Aorta (tissue), 5 donors: ENCODE measurements at regions of chr12 and their contacts with region 1.

Region 1: GRCh38 chr12:19186722-19187661 is 57.5 kb downstream of the PLEKHA5 start:
- DNase-seq: no peak
- ATAC-seq: peak; percentile 65
- H3K4me3 ChIP-seq: no peak overlapping the region
- H3K27ac ChIP-seq: no peak overlapping the region
- H3K4me1 ChIP-seq: peaks cover 10 to 11% of the 10 kb centered on the region in 2 donors
- H3K27me3 ChIP-seq: no peaks in the 10 kb centered on the region

Region 2: DNA sequence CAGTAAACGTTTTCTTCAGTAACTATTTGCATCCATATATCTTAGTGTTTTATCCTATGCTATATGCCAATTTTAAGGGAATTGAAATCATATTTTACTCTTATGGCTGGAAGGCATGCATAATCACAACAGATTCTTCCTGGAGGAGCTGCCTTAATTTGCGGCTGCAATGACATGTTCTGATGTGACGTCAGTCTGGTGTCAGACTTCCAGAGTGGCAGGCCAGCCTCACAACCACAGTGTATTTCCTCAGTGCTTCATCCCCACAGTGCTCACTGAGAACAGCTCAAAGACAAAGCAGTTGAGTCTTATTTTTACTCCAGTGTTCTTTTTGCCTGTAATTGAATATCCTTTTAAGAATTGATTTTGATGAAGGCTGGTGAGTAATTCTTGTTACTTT is 49.7 kb after region 1 on chr12:
- intact Hi-C with region 1: loop called in 1 of 2 experiments (anchors 5 kb)
- DNase-seq: peak; percentile 50 to 66
- ATAC-seq: peak; percentile 74
- H3K4me3 ChIP-seq: no peak overlapping the region
- H3K27ac ChIP-seq: peak overlapping the region in 1 of 2 donors; percentile 54
- H3K4me1 ChIP-seq: peaks cover 4 to 19% of the 10 kb centered on the region in 2 donors
- H3K27me3 ChIP-seq: no peaks in the 10 kb centered on the region

Region 3: DNA sequence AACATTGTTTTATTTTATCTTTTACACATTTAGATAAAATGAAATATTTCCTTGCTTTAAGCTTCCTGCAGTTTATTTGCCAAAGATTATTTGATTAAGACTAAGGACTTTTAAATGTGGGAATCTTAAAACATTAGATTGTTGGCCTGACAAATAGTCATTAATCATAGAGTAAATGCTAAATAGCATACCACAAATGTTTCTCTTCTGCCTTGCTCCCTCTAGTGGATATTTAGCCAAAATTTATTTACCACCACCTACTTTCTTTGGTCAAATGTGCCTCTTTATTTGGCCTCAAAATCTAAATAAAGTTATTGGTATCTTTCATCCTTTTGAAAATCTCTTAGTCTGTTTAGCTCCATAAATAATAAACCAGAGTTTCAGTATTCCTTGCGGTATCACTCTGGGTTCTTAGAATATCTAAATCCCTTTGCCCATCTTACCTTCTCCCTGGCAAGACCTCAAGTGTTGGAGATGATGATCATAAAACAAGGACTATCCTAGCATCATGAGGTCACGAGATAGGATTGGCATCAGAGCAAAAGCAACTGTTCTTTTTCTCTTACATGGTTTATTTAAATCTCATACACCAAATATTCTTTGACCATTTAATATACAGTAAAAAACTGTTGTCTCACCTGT is 101.7 kb after region 1 on chr12:
- intact Hi-C with region 1: loop called (anchors 5 kb)
- DNase-seq: no peak
- ATAC-seq: no peak
- H3K4me3 ChIP-seq: no peak overlapping the region
- H3K27ac ChIP-seq: no peak overlapping the region
- H3K4me1 ChIP-seq: no peaks in the 10 kb centered on the region
- H3K27me3 ChIP-seq: no peaks in the 10 kb centered on the region

Region 4: GRCh38 chr12:19439059-19440018 is 252.3 kb after region 1 on chr12 and contains the start of gene AEBP2:
- intact Hi-C with region 1: loop called in 1 of 2 experiments (anchors 10 kb)
- DNase-seq: peak; percentile 97 to 98
- ATAC-seq: peak; percentile 96
- H3K4me3 ChIP-seq: peak within 1 kb of the TSS; percentile 43 to 85
- H3K27ac ChIP-seq: peak within 1 kb of the TSS; percentile 79 to 93
- H3K4me1 ChIP-seq: no peaks in the 10 kb centered on the region
- H3K27me3 ChIP-seq: no peaks in the 10 kb centered on the region
- total RNA-seq, gene AEBP2: 74.3 to 89.0 TPM

Region 5: DNA sequence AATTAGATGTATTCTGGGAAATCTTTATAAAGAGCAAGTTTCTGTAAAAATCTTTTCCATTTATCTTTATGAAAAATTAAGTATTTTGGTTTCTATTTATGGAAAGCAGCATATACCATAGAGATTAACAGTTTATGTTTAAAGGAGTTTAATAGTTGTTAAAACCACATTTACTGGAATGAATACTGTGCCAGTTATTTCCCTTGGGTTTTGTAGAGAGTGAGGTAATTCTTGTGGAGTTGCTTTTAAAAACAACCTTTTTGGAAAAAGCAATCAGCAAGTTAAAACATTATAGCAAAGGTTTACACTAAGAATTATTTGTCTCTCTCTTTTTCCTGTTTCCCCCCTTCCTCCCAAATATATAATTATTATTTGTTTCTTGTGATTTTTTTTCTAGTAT is 287.2 kb after region 1 on chr12:
- intact Hi-C with region 1: no loop called
- DNase-seq: no peak
- ATAC-seq: no peak
- H3K4me3 ChIP-seq: no peak overlapping the region
- H3K27ac ChIP-seq: no peak overlapping the region
- H3K4me1 ChIP-seq: peaks cover 2 to 3% of the 10 kb centered on the region in 2 donors
- H3K27me3 ChIP-seq: no peaks in the 10 kb centered on the region